Mammary epithelial cell (primary cell): ENCODE measurements at regions of chr9 and their contacts with region 1.

Region 1: DNA sequence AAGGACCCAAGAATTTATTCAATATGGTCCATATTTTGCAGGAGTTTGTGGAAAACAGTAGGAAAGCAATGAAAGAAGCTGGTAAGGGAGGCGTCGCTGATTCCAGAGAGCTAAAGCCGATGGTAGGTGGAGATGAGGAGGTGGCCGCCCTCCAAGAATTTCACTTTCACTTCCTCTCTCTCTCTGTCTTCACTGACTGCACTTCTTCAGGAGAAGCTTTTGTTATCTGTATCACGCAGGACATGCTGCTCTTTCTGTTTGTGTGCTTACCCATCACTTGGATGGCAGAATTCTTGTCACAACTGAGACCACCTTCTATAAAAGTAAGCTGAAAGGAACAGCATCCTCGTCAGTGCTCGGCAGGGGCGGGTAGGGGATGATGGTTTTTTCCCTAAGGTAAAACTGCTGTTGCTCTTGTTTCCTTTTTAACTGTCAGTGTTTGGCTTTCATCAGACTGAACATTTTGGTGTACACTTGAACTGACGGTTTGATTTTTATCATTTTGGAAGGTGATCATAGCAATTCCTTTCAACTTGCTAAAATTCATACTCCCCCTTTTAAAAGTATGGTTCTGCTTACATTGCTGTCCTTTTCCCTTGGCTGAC is 62.4 kb upstream of the FSD1L start:
- DNase-seq: peak; percentile 49
- H3K4me3 ChIP-seq: peak overlapping the region; percentile 47 to 62 (median 48)
- H3K27ac ChIP-seq: peak overlapping the region; percentile 41
- H3K4me1 ChIP-seq: no peaks in the 10 kb centered on the region
- H3K27me3 ChIP-seq: no peaks in the 10 kb centered on the region
- CTCF ChIP-seq: no peak

Region 2: GRCh38 chr9:105191508-105192121 is 193.9 kb before region 1 on chr9:
- CTCF ChIA-PET with region 1: no interaction called
- dilution Hi-C with region 1: loop called (anchors 25 kb)
- in situ Hi-C with region 1: no loop called
- intact Hi-C with region 1: no loop called
- DNase-seq: no peak
- H3K4me3 ChIP-seq: no peak overlapping the region
- H3K27ac ChIP-seq: no peak overlapping the region
- H3K4me1 ChIP-seq: no peaks in the 10 kb centered on the region
- H3K27me3 ChIP-seq: no peaks in the 10 kb centered on the region
- CTCF ChIP-seq: no peak

Region 3: GRCh38 chr9:105259731-105260612 is 125.5 kb before region 1 on chr9:
- CTCF ChIA-PET with region 1: no interaction called
- dilution Hi-C with region 1: no loop called
- in situ Hi-C with region 1: loop called in 1 of 2 experiments (anchors 10 kb)
- intact Hi-C with region 1: no loop called
- DNase-seq: no peak
- H3K4me3 ChIP-seq: no peak overlapping the region
- H3K27ac ChIP-seq: no peak overlapping the region
- H3K4me1 ChIP-seq: no peaks in the 10 kb centered on the region
- H3K27me3 ChIP-seq: no peaks in the 10 kb centered on the region
- CTCF ChIP-seq: no peak